Right lobe of liver (tissue), 6 donors: ENCODE measurements at regions of chr7 and their contacts with region 1.

Region 1: GRCh38 chr7:23175938-23176337 is 5.9 kb upstream of the NUP42 start:
- DNase-seq: no peak
- ATAC-seq: peak in 3 of 4 donors; percentile 29 to 55 (median 39)
- H3K4me3 ChIP-seq: no peak overlapping the region
- H3K27ac ChIP-seq: no peak overlapping the region
- H3K4me1 ChIP-seq: no peaks in the 10 kb centered on the region
- H3K27me3 ChIP-seq: no peaks in the 10 kb centered on the region
- CTCF ChIP-seq: no peak
- POLR2A ChIP-seq: no peak

Region 2: GRCh38 chr7:23105644-23106056 is 70.3 kb before region 1 on chr7 and contains the start of gene KLHL7:
- intact Hi-C with region 1: loop called in 1 of 2 experiments (anchors 10 kb)
- DNase-seq: peak; percentile 98
- ATAC-seq: peak; percentile 99 to 100 (median 99)
- H3K4me3 ChIP-seq: peak within 1 kb of the TSS; percentile 83 to 93 (median 90)
- H3K27ac ChIP-seq: peak within 1 kb of the TSS; percentile 80 to 89 (median 89)
- H3K4me1 ChIP-seq: peaks cover 0 to 15% (median 3%) of the 10 kb centered on the region in 4 donors
- H3K27me3 ChIP-seq: no peaks in the 10 kb centered on the region
- CTCF ChIP-seq: no peak
- POLR2A ChIP-seq: peak; percentile 92
- total RNA-seq, gene KLHL7: 6.3 to 9.1 (median 7.5) TPM

Region 3: GRCh38 chr7:23546897-23547572 is 371.1 kb after region 1 on chr7:
- intact Hi-C with region 1: no loop called
- DNase-seq: peak in 2 of 3 donors; percentile 42 to 74
- ATAC-seq: peak; percentile 95 to 98 (median 96)
- H3K4me3 ChIP-seq: no peak overlapping the region
- H3K27ac ChIP-seq: no peak overlapping the region
- H3K4me1 ChIP-seq: no peaks in the 10 kb centered on the region
- H3K27me3 ChIP-seq: no peaks in the 10 kb centered on the region
- CTCF ChIP-seq: peak; percentile 90 to 98 (median 98)
- POLR2A ChIP-seq: no peak